ENCODE measurements at regions of chr13 and their contacts with region 1.

Region 1: GRCh38 chr13:49976314-49977258 is 20.3 kb upstream of the TRIM13 start:
- DNase-seq: peak; percentile 59
- ATAC-seq: peak; percentile 90
- H3K4me3 ChIP-seq: no peak overlapping the region
- H3K27ac ChIP-seq: no peak overlapping the region
- H3K4me1 ChIP-seq: no peaks in the 10 kb centered on the region
- H3K27me3 ChIP-seq: no peaks in the 10 kb centered on the region
- CTCF ChIP-seq: peak; percentile 85

Region 2: DNA sequence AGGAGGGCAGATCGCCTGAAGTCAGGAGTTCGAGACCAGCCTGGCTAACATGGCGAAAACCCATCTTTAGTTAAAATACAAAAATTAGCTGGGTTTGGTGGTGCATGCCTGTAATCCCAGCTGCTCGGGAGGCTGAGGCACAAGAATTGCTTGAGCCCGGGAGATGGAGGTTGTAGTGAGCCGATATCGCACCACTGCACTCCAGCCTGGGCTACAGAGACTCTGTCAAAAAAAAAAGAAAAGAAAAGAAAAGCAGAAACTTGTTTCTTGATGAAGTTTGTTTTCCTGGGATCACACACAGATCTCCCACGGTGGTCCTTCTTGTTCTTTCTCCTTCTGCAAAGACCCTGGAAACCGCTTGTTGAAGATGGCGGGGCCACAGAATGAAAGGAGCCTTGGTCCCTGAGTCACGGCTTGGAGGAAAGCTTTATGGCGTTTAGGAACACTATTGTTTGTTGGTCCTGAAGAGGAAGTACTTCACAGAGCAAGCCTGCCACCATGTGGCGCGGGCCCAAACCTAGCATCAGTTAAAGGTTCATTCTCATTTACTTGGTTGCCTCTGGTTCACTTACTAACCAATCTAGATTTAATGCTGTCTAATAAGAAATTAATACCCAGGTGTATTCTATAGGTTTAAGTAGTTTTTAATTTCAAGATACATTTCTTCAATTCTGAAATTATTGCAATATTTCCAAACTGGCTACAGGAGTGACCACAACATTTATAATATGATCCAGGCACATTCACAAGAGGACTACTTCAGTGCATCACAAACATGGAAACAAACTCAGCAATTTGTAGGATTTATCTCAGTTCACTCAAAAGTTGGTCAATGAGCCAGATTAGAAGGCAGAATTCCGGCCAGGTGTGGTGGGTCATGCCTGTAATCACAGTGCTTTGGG is 369.6 kb before region 1 on chr13:
- CTCF ChIA-PET with region 1: no interaction called
- POLR2A ChIA-PET with region 1: no interaction called
- in situ Hi-C with region 1: no loop called
- intact Hi-C with region 1: no loop called
- DNase-seq: peak; percentile 63
- ATAC-seq: peak; percentile 99
- H3K4me3 ChIP-seq: peak overlapping the region; percentile 26 to 51
- H3K27ac ChIP-seq: peak overlapping the region; percentile 52
- H3K4me1 ChIP-seq: peaks cover 3% of the 10 kb centered on the region; the same call in 1 of the 2 replicates
- H3K27me3 ChIP-seq: no peaks in the 10 kb centered on the region
- CTCF ChIP-seq: peak; percentile 81

Region 3: DNA sequence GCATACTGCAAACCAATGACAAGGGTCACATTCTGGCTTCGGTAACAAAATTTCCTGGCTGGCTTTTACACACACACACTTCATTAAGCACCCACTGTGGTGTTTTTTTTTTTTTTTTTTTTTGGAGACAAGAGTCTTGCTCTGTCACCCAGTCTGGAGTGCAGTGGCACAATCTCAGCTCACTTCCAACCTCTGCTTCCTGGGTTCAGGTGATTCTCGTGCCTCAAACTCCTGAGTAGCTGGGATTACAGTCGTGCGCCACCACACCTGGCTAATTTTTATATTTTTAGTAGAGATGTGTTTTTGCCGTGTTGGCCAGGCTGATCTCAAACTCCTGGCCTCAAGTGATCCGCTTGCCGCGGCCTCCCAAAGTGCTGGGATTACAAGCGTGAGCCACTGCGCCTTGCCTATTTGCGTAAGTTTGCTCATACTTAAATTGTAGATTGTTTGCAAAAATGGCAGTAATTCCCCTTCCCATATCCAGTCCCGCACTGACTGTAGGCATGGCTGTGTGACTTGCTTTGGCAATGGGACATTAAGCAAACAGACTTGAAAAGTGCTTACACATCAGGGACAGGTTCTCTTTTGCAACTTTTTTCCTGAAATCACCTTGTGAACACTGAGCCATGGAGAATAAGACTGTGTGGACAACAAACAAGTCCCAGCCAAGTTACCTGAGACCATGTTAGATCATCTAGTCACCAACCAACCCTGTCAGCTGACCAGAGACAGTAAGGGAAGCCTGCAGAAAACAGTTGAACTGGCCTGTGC is 243.2 kb before region 1 on chr13:
- CTCF ChIA-PET with region 1: no interaction called
- POLR2A ChIA-PET with region 1: interaction called, 18 read pairs
- in situ Hi-C with region 1: no loop called
- intact Hi-C with region 1: no loop called
- DNase-seq: no peak
- ATAC-seq: no peak
- H3K4me3 ChIP-seq: no peak overlapping the region
- H3K27ac ChIP-seq: no peak overlapping the region
- H3K4me1 ChIP-seq: no peaks in the 10 kb centered on the region
- H3K27me3 ChIP-seq: no peaks in the 10 kb centered on the region
- CTCF ChIP-seq: no peak

Region 4: GRCh38 chr13:49927755-49928154 is 48.8 kb before region 1 on chr13:
- CTCF ChIA-PET with region 1: interaction called, 12 read pairs
- POLR2A ChIA-PET with region 1: no interaction called
- in situ Hi-C with region 1: no loop called
- intact Hi-C with region 1: no loop called
- DNase-seq: no peak
- ATAC-seq: no peak
- H3K4me3 ChIP-seq: no peak overlapping the region
- H3K27ac ChIP-seq: no peak overlapping the region
- H3K4me1 ChIP-seq: no peaks in the 10 kb centered on the region
- H3K27me3 ChIP-seq: no peaks in the 10 kb centered on the region
- CTCF ChIP-seq: no peak

Measured in Panc1 (cell line).